ENCODE measurements at regions of chr2 and their contacts with region 1.

Region 1: DNA sequence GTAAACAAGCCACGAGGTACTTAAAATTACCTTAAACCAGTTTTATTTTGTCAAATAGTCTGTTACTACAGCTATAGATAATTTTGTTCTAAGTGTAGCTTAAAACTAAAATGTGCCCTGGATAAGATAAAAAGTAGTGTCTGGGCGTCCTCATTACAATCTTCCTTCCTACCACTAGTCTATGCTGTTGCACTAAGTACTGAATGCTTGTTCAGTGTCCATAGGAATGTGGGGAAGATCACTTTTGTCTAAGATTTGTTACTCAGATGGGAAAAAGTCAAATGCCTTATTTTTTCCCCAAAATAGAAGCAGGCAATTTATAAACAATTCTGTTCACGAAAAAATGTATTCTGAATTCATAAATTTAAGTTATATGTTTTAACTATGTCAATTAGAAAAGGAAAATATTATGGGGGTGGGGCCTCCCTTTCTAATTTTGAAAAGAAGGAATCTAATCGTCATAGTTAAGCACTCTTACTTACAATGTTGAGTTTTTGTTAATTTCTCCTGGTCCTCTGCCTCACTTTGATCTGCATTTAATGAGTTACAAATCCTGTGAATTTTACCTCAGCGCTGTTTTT is 140.4 kb upstream of the VRK2 start:
- DNase-seq: peak; percentile 71
- H3K4me3 Mint-ChIP-seq: no peak overlapping the region
- H3K27ac Mint-ChIP-seq: no peak overlapping the region
- H3K4me1 Mint-ChIP-seq: peaks cover 6% of the 10 kb centered on the region
- H3K27me3 Mint-ChIP-seq: no peaks in the 10 kb centered on the region
- CTCF ChIP-seq: peak; percentile 80

Region 2: DNA sequence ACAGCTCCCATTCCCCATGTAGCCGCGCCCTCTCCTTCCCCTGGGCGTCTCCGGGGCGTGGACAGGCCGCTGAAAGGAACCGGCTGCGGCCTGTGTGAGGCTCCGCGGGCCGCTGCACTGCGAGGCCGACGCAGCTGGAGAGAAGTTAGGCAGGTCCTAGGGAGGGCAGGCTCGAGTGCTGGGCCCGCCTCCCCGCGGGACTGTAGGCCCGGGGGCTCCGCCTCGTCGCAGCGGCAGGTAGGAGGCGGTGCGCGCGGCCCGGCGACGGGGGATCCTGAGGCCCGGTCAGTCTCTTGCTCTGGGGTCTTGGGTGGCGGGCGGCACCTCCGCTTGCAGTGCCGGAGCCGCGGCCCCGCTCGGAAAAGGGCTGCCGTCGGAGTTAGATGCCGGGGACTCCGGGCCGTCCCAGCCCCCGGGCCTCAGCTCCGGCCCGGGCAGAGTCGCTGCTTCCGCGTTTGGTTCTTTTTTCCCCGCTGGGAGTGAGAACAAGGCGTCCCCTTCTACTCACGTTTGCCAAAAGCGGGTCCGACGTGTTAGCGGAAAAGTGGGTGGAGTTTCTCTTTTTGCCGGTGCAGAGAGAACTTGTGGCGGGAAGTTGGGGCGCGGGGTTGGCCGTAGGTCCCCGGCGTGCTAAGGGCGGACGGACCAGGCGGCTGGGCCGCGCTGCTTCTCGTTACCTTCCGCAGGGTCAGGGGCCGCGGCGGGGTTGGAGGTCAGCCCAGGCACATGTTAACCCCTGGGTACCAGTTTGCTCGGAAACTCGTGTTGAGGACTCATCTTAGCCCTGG is 140.5 kb after region 1 on chr2 and contains the start of gene VRK2:
- CTCF ChIA-PET with region 1: interaction called, 3 read pairs
- POLR2A ChIA-PET with region 1: interaction called, 4 read pairs
- intact Hi-C with region 1: loop called (anchors 2 kb)
- DNase-seq: peak; percentile 97
- H3K4me3 Mint-ChIP-seq: peak within 1 kb of the TSS; percentile 86
- H3K27ac Mint-ChIP-seq: peak within 1 kb of the TSS; percentile 90
- H3K4me1 Mint-ChIP-seq: peaks cover 17% of the 10 kb centered on the region
- H3K27me3 Mint-ChIP-seq: no peaks in the 10 kb centered on the region
- CTCF ChIP-seq: no peak
- total RNA-seq, gene VRK2: 44.6 and 52.7 TPM in 2 replicates

Region 3: GRCh38 chr2:58131191-58132011 is 225.2 kb after region 1 on chr2:
- CTCF ChIA-PET with region 1: no interaction called
- POLR2A ChIA-PET with region 1: no interaction called
- intact Hi-C with region 1: loop called (anchors 1 kb)
- DNase-seq: no peak
- H3K4me3 Mint-ChIP-seq: no peak overlapping the region
- H3K27ac Mint-ChIP-seq: peak overlapping the region; percentile 66
- H3K4me1 Mint-ChIP-seq: peaks cover 15% of the 10 kb centered on the region
- H3K27me3 Mint-ChIP-seq: no peaks in the 10 kb centered on the region
- CTCF ChIP-seq: peak; percentile 13

Region 4: DNA sequence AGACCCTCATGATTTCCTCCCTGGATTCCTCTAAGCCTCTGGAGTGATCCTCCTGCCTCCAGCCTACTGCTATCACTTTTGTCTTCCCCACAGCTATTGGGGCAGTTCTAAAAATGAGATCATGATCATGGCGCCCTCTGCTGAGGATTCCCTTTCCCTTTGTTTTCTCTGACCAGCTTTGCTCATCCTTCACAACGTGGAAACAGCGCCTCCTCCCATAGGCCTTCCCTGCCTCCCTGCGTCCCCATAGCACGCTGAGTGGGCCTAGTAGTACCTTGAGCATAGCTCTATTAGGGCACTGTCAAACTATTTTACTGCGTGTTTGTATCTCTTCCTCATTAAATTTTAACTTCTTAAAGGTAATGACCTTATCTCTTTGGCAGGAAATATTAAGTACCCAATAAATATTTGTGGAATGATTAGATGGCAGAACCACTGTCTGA is 541.8 kb after region 1 on chr2:
- CTCF ChIA-PET with region 1: interaction called, 16 read pairs
- POLR2A ChIA-PET with region 1: interaction called, 5 read pairs
- intact Hi-C with region 1: loop called (anchors 1 kb)
- DNase-seq: peak; percentile 92
- H3K4me3 Mint-ChIP-seq: no peak overlapping the region
- H3K27ac Mint-ChIP-seq: peak overlapping the region; percentile 17
- H3K4me1 Mint-ChIP-seq: peaks cover 14% of the 10 kb centered on the region
- H3K27me3 Mint-ChIP-seq: no peaks in the 10 kb centered on the region
- CTCF ChIP-seq: peak; percentile 73

Region 5: GRCh38 chr2:58680755-58681310 is 774.6 kb after region 1 on chr2:
- CTCF ChIA-PET with region 1: interaction called, 5 read pairs
- POLR2A ChIA-PET with region 1: no interaction called
- intact Hi-C with region 1: loop called (anchors 1 kb)
- DNase-seq: peak; percentile 3
- H3K4me3 Mint-ChIP-seq: no peak overlapping the region
- H3K27ac Mint-ChIP-seq: no peak overlapping the region
- H3K4me1 Mint-ChIP-seq: no peaks in the 10 kb centered on the region
- H3K27me3 Mint-ChIP-seq: no peaks in the 10 kb centered on the region
- CTCF ChIP-seq: peak; percentile 26

Region 6: DNA sequence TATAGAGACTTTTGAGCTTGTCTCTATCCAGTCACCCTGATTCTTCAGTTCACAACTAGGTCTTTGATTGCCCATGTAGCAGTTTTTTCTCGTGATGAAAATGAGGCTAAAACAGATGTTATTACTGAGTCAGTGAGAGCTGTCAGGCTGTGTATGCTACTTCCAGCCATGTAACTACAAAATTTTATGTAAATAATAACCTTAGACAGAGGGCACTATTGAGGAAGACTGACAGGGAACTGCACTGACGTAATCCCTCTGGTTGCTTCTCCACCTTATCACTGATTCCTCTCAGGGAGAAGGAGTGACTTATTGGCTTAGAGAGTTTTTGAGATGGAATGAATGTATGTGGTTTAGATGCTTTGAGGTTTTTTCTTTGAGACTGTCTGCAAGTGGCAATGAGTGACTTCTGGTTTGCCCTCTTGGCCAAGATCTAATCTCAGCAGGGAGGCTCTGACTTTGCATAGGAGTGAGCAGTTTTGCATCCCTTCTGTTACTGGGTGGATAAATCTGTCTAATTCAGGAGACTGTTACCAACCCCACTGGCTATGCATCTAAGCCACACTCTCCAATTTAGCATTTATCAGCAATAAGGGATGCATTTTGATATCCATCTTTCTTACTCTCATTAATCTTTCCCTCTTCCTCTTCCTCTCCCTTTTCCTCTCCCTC is 890.1 kb after region 1 on chr2:
- CTCF ChIA-PET with region 1: no interaction called
- POLR2A ChIA-PET with region 1: no interaction called
- intact Hi-C with region 1: no loop called
- DNase-seq: peak; percentile 9
- H3K4me3 Mint-ChIP-seq: no peak overlapping the region
- H3K27ac Mint-ChIP-seq: no peak overlapping the region
- H3K4me1 Mint-ChIP-seq: no peaks in the 10 kb centered on the region
- H3K27me3 Mint-ChIP-seq: no peaks in the 10 kb centered on the region
- CTCF ChIP-seq: no peak